Posterior vena cava (tissue), 2 donors: ENCODE measurements at regions of chr12 and their contacts with region 1.

Region 1: GRCh38 chr12:117836999-117837736 is 131.6 kb downstream of the KSR2 start:
- DNase-seq: peak; percentile 94

Region 2: DNA sequence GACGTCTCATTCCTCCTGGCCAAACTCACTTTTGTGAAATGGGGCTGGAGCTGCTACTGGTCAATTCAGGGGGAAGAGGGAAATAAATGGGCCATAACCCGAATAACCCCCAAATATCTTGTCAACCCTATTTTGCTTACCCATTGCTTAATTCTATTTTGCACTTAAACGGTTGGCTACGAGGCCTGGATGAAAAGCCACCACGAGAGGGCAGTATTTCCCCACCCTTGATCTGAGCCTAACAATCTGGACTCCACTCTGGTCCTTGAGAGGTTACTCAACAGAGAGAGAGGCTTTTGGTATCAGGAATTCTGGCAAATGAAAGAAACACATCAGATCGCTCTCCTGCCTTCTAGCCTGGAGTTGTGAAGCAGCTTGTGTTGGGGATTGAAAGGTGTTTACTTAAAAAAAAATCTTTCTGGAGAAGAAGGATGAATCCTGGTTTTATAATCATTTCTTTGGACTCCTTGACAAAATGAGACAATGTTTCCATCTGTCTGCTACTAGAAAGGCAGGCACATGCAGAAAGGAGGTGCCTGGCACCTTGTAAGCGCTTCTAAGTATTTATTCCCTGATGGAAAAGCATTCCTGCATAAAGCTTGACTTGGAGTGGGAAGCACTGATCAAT is 624.5 kb before region 1 on chr12:
- intact Hi-C with region 1: loop called in 1 of 2 experiments (anchors 5 kb)
- DNase-seq: no peak

Region 3: DNA sequence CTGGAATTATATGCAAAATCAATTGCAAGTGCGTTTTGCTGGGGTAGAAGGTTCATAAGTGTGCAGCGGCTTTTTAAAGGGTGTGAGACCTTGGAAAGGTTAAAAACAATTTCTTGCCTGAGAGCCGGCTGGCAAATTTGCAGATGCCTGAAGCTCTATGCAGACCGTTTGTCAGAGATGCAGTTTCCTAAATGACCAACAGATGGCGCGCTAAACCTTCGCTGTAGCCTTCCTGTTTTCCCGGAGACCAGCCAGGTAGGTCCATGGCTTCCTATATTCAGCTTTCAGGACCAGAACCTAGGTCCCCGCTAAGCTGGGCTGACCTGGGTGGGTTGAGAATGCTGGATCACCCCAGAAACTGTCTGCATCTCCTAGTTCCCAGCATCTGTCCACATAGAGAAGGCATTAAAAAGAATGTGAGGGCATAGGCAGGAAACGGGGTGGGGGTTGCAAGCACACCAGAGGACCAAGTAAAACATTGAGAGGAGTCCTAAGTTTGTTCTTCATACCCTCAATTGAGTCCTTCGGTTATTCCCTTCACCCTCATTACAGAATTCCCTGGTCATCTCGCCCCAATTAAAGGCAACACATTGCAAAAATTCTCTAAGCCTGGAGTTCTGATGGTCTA is 470.0 kb before region 1 on chr12:
- intact Hi-C with region 1: loop called (anchors 2 kb)
- DNase-seq: peak; percentile 85